PC-3 (cell line): ENCODE measurements at regions of chr9 and their contacts with region 1.

Region 1: GRCh38 chr9:763692-764524 is 77.6 kb upstream of the DMRT1 start:
- DNase-seq: peak; percentile 84
- ATAC-seq: peak; percentile 99
- H3K4me3 ChIP-seq: no peak overlapping the region
- H3K27ac ChIP-seq: no peak overlapping the region
- H3K4me1 ChIP-seq: peaks cover 8% of the 10 kb centered on the region; the same call in 1 of the 2 replicates
- H3K27me3 ChIP-seq: no peaks in the 10 kb centered on the region
- CTCF ChIP-seq: peak; percentile 88

Region 2: GRCh38 chr9:249025-249424 is 514.9 kb before region 1 on chr9:
- CTCF ChIA-PET with region 1: no interaction called
- POLR2A ChIA-PET with region 1: no interaction called
- intact Hi-C with region 1: no loop called
- DNase-seq: peak; percentile 44
- ATAC-seq: no peak
- H3K4me3 ChIP-seq: no peak overlapping the region
- H3K27ac ChIP-seq: no peak overlapping the region
- H3K4me1 ChIP-seq: no peaks in the 10 kb centered on the region
- H3K27me3 ChIP-seq: no peaks in the 10 kb centered on the region
- CTCF ChIP-seq: no peak

Region 3: DNA sequence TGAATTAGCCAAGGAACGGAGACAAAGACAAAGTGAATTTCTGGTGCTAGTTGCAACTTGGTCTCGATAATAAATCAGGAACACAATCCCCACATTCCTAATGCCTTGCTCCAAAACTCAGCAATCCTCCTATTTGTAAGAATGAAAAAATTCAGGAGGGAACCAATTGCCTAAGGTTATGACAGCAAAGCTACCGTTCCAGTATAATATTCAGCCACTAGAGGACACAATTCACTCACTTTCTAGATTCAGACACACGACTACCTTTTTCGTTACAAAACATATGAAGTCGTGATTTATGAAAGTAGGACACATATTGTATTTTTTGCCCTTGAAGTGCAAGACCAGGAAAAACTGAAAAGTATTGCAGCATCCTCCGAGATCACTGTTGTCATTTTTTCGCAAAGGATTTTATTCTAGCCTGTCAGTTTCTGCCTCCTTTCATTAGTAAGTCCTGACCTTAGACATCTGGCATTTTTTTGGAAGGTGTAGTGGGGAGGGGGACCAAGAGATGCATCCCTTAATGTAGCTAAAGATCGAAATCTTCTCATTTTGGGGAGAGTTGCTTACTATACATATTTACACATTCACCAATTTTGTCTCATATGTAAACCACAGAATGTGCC is 416.1 kb before region 1 on chr9:
- CTCF ChIA-PET with region 1: no interaction called
- POLR2A ChIA-PET with region 1: no interaction called
- intact Hi-C with region 1: loop called (anchors 1 kb)
- DNase-seq: peak; percentile 71
- ATAC-seq: peak; percentile 66
- H3K4me3 ChIP-seq: no peak overlapping the region
- H3K27ac ChIP-seq: no peak overlapping the region
- H3K4me1 ChIP-seq: no peaks in the 10 kb centered on the region
- H3K27me3 ChIP-seq: no peaks in the 10 kb centered on the region
- CTCF ChIP-seq: peak; percentile 84

Region 4: DNA sequence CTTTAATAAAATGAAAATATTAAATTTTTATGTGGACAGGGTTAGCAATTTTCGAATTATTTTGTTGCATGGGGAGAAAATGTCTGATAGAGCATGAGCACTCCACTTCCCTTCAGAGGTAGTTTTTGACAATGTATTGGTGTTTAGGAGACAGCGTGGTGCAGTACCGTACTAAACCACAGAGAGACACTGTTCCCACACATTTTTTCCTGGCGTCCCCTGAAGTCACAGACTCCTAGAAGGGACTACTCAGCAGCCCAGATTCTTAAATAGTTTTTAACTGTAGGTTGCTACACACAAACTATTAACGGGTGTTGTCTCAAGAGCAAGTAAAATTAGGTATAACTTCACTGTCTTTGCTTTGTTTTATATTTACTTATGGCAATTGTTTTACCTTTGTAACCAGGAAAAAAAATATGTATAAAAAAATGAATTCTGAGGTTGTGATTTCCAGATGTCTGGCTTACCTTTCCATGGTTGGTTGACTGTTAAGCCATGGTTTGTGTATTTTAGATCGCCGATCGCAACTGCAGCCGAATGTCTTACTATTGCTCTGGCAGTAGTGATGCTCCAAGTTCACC is 378.0 kb before region 1 on chr9:
- CTCF ChIA-PET with region 1: no interaction called
- POLR2A ChIA-PET with region 1: no interaction called
- intact Hi-C with region 1: loop called (anchors 1 kb)
- DNase-seq: peak; percentile 83
- ATAC-seq: peak; percentile 91
- H3K4me3 ChIP-seq: no peak overlapping the region
- H3K27ac ChIP-seq: no peak overlapping the region
- H3K4me1 ChIP-seq: no peaks in the 10 kb centered on the region
- H3K27me3 ChIP-seq: no peaks in the 10 kb centered on the region
- CTCF ChIP-seq: peak; percentile 86

Region 5: DNA sequence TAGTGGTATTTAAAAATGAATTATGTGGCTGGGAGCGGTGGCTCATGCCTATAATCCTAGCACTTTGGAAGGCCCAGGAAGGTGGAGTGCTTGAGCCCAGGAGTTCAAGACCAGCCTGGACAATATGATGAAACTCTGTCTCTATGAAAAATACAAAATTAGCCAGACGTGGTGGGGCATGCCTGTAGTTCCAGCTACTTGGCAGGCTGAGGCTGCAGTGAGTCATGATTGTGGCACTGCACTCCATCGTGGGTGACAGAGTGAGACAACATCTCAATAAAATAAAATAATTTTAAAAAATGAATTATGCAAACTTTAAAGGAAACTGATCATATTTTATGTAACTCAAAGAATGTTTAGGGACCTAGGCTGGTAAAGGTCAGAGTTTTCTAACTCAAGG is 233.2 kb before region 1 on chr9:
- CTCF ChIA-PET with region 1: no interaction called
- POLR2A ChIA-PET with region 1: no interaction called
- intact Hi-C with region 1: loop called (anchors 5 kb)
- DNase-seq: peak; percentile 60
- ATAC-seq: peak; percentile 85
- H3K4me3 ChIP-seq: no peak overlapping the region
- H3K27ac ChIP-seq: no peak overlapping the region
- H3K4me1 ChIP-seq: peaks cover 20% of the 10 kb centered on the region
- H3K27me3 ChIP-seq: no peaks in the 10 kb centered on the region
- CTCF ChIP-seq: no peak

Region 6: DNA sequence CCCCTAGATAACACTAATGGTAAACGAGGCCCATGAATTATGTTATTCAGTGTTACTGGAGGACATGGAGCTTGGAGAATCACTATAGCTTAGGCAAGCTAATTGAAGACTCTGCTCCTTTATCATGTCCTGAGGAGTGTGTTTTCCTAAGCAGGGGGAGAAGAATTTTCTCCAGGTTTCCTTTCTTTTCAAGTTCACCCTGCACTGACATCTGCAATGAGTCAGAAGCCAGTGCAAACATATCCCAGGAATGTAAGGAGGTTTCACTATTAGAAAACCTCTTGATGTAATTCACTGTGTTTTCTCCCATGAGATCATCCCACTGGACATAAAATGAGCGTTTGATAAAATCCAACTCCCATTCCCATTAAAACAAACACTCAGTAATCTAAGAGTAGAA is 361.8 kb after region 1 on chr9:
- CTCF ChIA-PET with region 1: no interaction called
- POLR2A ChIA-PET with region 1: no interaction called
- intact Hi-C with region 1: no loop called
- DNase-seq: peak; percentile 80
- ATAC-seq: peak; percentile 99
- H3K4me3 ChIP-seq: no peak overlapping the region
- H3K27ac ChIP-seq: peak overlapping the region; percentile 75
- H3K4me1 ChIP-seq: peaks cover 14% of the 10 kb centered on the region
- H3K27me3 ChIP-seq: no peaks in the 10 kb centered on the region
- CTCF ChIP-seq: no peak